RWPE1 (cell line): ENCODE measurements at regions of chr18 and their contacts with region 1.

Region 1: DNA sequence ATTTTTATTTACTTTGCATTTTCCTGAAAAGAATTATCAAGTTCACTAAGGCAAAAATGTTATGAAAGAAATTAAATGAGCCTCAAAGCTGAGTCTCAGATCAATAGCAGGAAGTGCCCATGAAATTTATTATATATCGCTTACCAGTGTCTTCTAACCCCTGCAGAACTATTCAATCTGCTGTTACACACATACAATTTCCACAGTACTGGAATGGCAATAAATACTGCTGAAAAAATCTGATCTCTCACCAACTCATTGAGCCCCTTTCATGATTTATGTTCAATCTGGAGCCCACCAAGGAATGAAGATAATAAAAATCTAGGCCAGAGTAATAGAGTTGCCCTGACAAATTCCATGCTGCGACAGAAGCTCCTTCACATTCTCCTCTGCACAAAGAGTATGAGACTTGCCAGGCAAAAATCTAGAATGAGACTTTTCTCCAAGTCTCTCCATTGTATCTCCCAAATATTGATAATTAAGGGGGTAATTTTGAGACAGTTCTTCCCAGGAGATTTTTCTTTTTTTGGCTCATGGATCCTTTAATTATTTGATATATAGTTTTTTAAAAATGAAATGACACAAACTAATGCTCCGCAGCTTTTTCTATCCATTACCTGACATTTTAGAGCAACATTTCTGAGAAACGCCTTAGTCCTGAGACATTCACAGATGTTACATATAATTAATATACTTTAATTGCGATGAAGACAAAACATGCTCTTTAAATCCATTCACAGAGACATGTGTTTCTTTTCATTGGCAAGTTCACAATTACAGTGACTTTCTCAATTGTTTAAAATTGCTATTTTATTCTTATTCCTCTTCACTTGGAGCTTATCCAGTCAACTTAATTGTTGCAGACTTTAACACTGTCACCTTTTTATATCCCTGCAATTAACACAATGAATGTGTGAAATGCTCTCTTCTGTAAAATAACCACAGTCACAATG is 1020.4 kb downstream of the CBLN2 start:
- DNase-seq: no peak
- H3K27ac ChIP-seq: no peak overlapping the region
- CTCF ChIP-seq: no peak

Region 2: GRCh38 chr18:71105078-71105819 is 418.5 kb before region 1 on chr18:
- CTCF ChIA-PET with region 1: interaction called, 10 read pairs
- POLR2A ChIA-PET with region 1: no interaction called
- DNase-seq: no peak
- H3K27ac ChIP-seq: no peak overlapping the region
- CTCF ChIP-seq: no peak